Ascending aorta (tissue), 2 donors: ENCODE measurements at regions of chr1 and their contacts with region 1.

Region 1: DNA sequence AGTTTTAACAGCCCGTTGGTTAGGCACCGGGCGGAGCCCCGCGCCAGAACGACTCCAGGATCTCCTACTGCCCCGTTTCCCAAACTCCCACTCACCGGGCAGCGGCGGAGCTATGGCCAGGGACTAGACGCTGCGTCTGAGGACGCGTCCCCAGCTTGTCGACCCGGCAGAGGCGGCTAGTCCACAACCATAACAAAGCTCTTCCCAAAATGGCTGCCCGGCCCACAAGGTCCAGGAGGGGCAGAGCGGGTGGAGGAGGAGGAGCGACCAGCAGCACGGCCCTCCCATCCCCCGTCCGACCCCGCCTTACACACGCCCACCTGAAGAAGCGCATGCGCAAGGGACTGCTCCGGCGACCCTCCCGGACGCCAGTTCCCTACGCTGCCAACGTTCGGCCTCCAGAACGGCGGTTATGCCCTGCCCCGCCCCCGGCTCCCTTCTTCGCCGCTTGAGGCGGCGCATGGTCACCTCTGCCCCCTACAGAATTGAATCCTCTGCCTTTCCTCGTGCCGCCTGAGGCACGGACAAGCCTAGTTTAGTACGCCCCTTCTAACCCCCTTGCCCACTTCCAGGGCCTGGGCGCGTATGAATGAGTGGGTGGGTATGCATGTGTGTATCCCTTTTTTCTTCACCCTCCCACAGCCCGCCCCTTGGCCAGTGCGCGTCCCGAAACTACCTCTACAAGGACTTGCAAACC is at the start of gene GPBP1L1:
- DNase-seq: peak; percentile 84 to 98
- H3K4me3 ChIP-seq: peak within 1 kb of the TSS; percentile 71 to 89
- H3K27ac ChIP-seq: peak within 1 kb of the TSS; percentile 97
- H3K4me1 ChIP-seq: peaks cover 0 to 22% of the 10 kb centered on the region in 2 donors
- H3K27me3 ChIP-seq: no peaks in the 10 kb centered on the region
- CTCF ChIP-seq: no peak
- total RNA-seq, gene GPBP1L1: 161 TPM

Region 2: GRCh38 chr1:44674113-44675000 is 1012.1 kb before region 1 on chr1 and contains the starts of genes ARMH1 and TMEM53:
- intact Hi-C with region 1: loop called (anchors 5 kb)
- DNase-seq: peak; percentile 99 to 100
- H3K4me3 ChIP-seq: peak within 1 kb of the TSS; percentile 64 to 85
- H3K27ac ChIP-seq: peak within 1 kb of the TSS; percentile 86 to 92
- H3K4me1 ChIP-seq: peaks cover 7 to 27% of the 10 kb centered on the region in 2 donors
- H3K27me3 ChIP-seq: no peaks in the 10 kb centered on the region
- CTCF ChIP-seq: no peak
- total RNA-seq, gene ARMH1: not detected
- total RNA-seq, gene TMEM53: 9.2 TPM

Region 3: DNA sequence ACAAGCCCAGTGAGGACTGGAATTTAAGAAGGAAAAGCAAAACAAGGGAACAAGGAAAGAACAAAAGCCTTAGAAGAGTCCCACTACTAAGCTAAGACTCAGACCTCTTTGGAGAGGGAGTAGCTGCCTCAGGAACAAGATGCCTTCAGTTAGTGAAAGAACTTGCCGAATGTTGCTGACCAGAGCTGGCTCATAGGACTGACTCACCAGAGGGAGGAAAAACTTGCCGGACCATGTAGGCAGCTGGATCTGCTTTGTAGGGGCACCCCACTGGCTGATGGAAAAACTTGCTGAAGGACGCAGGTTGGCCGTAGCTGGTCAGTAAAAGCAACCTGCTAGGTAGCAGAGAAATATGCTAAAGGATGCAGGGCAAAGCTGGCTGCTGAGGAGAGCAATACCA is 464.7 kb before region 1 on chr1:
- intact Hi-C with region 1: no loop called
- DNase-seq: no peak
- H3K4me3 ChIP-seq: no peak overlapping the region
- H3K27ac ChIP-seq: no peak overlapping the region
- H3K4me1 ChIP-seq: no peaks in the 10 kb centered on the region
- H3K27me3 ChIP-seq: no peaks in the 10 kb centered on the region
- CTCF ChIP-seq: no peak

Region 4: DNA sequence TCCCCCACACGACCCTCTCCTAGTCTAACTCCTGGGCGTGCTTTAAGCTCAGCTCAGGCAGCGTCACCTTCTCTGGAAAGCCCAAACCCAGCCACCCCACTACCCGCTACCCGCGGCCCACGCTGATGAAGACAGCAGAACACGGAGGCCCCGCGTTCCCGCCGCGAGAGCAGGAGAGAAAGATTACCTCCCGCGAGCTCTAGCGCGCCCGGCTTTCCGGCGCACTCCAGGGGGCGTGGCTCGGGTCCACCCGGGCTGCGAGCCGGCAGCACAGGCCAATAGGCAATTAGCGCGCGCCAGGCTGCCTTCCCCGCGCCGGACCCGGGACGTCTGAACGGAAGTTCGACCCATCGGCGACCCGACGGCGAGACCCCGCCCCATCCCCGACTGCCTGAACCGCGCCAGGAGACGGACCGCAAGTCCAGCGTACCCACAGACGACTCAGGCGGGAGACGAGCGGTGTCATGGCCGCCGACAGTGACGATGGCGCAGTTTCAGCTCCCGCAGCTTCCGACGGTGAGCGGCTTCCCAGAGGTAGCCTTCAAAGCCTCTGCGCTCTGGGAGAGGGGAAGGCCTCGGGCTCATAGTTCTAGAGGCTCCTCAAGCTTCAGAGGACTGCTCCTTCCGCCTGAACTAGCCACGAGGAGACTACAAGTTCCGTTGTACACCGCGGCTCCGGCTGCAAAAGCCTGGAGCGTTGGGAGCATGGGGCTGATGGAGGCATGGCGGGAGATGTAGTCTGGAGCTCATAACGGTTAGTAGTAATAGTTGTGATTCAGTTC is 346.5 kb before region 1 on chr1 and contains the starts of genes MUTYH and TOE1:
- intact Hi-C with region 1: loop called (anchors 5 kb)
- DNase-seq: peak; percentile 64 to 95
- H3K4me3 ChIP-seq: peak within 1 kb of the TSS; percentile 84 to 87
- H3K27ac ChIP-seq: peak within 1 kb of the TSS; percentile 98
- H3K4me1 ChIP-seq: peaks cover 11 to 19% of the 10 kb centered on the region in 2 donors
- H3K27me3 ChIP-seq: no peaks in the 10 kb centered on the region
- CTCF ChIP-seq: peak in 1 of 3 experiments; percentile 9
- total RNA-seq, gene MUTYH: 1.8 TPM
- total RNA-seq, gene TOE1: 6.9 TPM

Region 5: GRCh38 chr1:45535988-45536766 is 150.3 kb before region 1 on chr1:
- intact Hi-C with region 1: no loop called
- DNase-seq: no peak
- H3K4me3 ChIP-seq: no peak overlapping the region
- H3K27ac ChIP-seq: no peak overlapping the region
- H3K4me1 ChIP-seq: no peaks in the 10 kb centered on the region
- H3K27me3 ChIP-seq: no peaks in the 10 kb centered on the region
- CTCF ChIP-seq: no peak

Region 6: DNA sequence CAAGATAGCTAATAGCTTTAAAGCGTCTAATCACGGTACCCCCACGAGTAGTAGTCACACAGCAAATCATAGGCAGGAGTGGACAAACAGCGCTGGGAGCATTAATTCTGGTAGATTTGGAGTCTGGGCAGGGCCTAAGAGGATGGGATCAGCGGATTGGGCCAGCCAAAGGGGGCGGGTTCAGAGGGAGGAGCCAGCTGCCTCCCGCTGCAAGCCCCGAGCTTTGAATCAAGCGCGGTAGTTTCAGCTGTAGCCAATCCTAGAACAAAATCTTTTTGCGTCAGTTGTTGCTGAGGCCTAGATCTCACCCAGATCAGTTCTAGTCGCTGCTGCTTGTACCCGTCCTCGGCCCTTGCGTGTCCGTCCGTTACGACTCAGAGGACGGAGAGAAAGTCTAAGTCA is 103.2 kb before region 1 on chr1:
- intact Hi-C with region 1: loop called (anchors 1 kb)
- DNase-seq: peak; percentile 87 to 97
- H3K4me3 ChIP-seq: peak overlapping the region; percentile 84 to 89
- H3K27ac ChIP-seq: peak overlapping the region; percentile 89 to 90
- H3K4me1 ChIP-seq: peaks cover 0 to 14% of the 10 kb centered on the region in 2 donors
- H3K27me3 ChIP-seq: no peaks in the 10 kb centered on the region
- CTCF ChIP-seq: no peak

Region 7: GRCh38 chr1:45803301-45803780 is 116.9 kb after region 1 on chr1 and contains the start of gene MAST2:
- intact Hi-C with region 1: loop called (anchors 1 kb)
- DNase-seq: peak; percentile 45 to 93
- H3K4me3 ChIP-seq: peak within 1 kb of the TSS; percentile 76 to 84
- H3K27ac ChIP-seq: peak within 1 kb of the TSS; percentile 79 to 91
- H3K4me1 ChIP-seq: peaks cover 11 to 13% of the 10 kb centered on the region in 2 donors
- H3K27me3 ChIP-seq: no peaks in the 10 kb centered on the region
- CTCF ChIP-seq: no peak
- total RNA-seq, gene MAST2: 61.0 TPM

Region 8: DNA sequence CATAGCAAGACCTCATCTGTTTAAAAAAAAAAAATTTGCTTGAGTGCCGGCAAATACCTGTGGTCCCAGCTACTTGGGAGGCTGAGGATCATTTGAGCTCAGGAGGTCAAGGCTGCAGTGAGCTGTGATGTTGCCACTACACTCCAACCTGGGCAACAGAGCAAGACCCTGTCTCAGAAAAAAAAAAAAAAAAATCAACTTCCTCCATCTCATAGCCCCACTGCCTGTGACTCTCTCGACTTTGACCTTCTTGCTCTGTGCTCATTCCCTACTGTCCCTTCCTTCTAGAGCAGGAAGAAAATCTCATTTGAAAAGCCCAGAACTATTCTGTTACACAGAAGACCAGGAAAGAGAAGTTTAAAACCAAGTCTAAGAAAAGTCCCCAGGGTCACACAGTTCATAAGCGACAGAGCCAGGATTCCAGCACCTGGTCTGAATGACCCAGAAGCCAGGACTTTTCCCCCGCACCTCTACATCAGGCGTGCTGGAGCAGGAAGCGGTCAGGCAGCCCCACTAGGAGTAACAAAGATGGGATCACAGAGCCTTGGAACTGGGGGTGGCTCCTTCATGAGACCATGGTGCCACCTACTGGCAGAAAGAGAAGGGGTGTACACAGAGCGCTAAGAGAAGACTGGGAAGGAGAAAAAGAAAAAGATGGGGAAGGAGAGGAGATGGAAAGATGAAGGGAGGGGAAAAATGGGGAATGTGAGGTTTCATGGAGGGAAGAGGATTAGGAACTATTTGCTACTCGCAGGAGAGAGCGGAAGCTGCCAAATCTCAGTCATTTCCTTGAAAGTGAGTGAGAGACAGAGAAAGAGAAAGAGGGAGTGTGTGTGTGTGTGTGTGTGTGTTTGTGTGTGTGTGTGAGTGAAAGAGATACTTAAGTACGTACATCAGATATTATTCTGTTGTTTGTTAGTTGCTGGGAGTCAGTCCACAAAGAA is 492.9 kb after region 1 on chr1:
- intact Hi-C with region 1: loop called (anchors 10 kb)
- DNase-seq: peak; percentile 27 to 91
- H3K4me3 ChIP-seq: no peak overlapping the region
- H3K27ac ChIP-seq: peak overlapping the region in 1 of 2 donors; percentile 44
- H3K4me1 ChIP-seq: peaks cover 8 to 13% of the 10 kb centered on the region in 2 donors
- H3K27me3 ChIP-seq: no peaks in the 10 kb centered on the region
- CTCF ChIP-seq: peak; percentile 81 to 96 (median 88)

Region 9: GRCh38 chr1:46757241-46757959 is 1070.9 kb after region 1 on chr1:
- intact Hi-C with region 1: no loop called
- DNase-seq: no peak
- H3K4me3 ChIP-seq: no peak overlapping the region
- H3K27ac ChIP-seq: no peak overlapping the region
- H3K4me1 ChIP-seq: no peaks in the 10 kb centered on the region
- H3K27me3 ChIP-seq: no peaks in the 10 kb centered on the region
- CTCF ChIP-seq: no peak